GM10248 (cell line): ENCODE measurements at regions of chr10 and their contacts with region 1.

Region 1: GRCh38 chr10:114103284-114103683 is 59.6 kb downstream of the ADRB1 start:
- DNase-seq: peak; percentile 70
- CTCF ChIP-seq: peak; percentile 59

Region 2: GRCh38 chr10:113808168-113808567 is 295.1 kb before region 1 on chr10:
- CTCF ChIA-PET with region 1: interaction called, 79 read pairs
- POLR2A ChIA-PET with region 1: no interaction called
- DNase-seq: no peak
- CTCF ChIP-seq: no peak

Region 3: GRCh38 chr10:114208351-114208750 is 105.1 kb after region 1 on chr10:
- CTCF ChIA-PET with region 1: no interaction called
- POLR2A ChIA-PET with region 1: no interaction called
- DNase-seq: no peak
- CTCF ChIP-seq: no peak